Activated CD8-positive, alpha-beta T cell treated with anti-CD3 and anti-CD28 coated beads for 36 hours (primary cell): ENCODE measurements at regions of chr9 and their contacts with region 1.

Region 1: GRCh38 chr9:6764523-6764922 is 6.8 kb downstream of the KDM4C start:
- DNase-seq: no peak
- ATAC-seq: no peak
- H3K4me3 Mint-ChIP-seq: no peak overlapping the region
- H3K27ac Mint-ChIP-seq: peak overlapping the region; percentile 6
- H3K4me1 Mint-ChIP-seq: peaks cover 64% of the 10 kb centered on the region
- H3K27me3 Mint-ChIP-seq: no peaks in the 10 kb centered on the region
- CTCF ChIP-seq: no peak

Region 2: DNA sequence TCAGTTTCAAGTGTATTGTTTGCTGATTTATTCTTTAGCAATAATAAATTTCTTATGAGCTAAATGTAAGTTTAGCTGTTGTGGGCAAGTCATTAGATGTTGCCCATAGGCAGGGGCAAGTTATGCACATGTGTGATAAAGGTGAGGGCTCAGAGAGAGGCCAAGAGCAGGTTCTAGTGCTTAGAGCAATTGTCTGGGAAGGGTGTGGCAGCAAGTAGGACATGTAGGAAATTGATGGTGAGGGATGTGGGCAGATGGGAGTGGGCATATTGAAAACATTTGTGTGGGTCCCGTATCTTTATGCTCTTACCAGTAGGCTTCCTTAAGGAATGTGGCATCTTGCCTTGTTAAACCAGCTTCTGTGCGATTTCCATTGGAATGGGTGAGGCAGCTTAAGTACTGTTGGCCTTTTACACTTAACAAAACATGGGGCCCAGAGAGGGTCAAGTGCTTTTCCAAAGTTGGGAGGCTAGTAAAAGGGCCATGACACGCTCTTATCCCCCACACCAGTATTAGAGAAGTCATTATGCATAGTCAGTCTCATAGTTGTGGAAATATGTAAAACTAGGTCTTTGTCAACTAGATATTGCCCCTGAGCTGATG is 53.9 kb after region 1 on chr9:
- CTCF ChIA-PET with region 1: no interaction called
- POLR2A ChIA-PET with region 1: no interaction called
- intact Hi-C with region 1: no loop called
- DNase-seq: no peak
- ATAC-seq: no peak
- H3K4me3 Mint-ChIP-seq: no peak overlapping the region
- H3K27ac Mint-ChIP-seq: no peak overlapping the region
- H3K4me1 Mint-ChIP-seq: peaks cover 12% of the 10 kb centered on the region
- H3K27me3 Mint-ChIP-seq: no peaks in the 10 kb centered on the region
- CTCF ChIP-seq: no peak

Region 3: GRCh38 chr9:6873857-6874256 is 109.3 kb after region 1 on chr9:
- CTCF ChIA-PET with region 1: no interaction called
- POLR2A ChIA-PET with region 1: no interaction called
- intact Hi-C with region 1: loop called (anchors 10 kb)
- DNase-seq: peak; percentile 82
- ATAC-seq: peak; percentile 85
- H3K4me3 Mint-ChIP-seq: peak overlapping the region; percentile 24
- H3K27ac Mint-ChIP-seq: peak overlapping the region; percentile 62
- H3K4me1 Mint-ChIP-seq: peaks cover 63% of the 10 kb centered on the region
- H3K27me3 Mint-ChIP-seq: no peaks in the 10 kb centered on the region
- CTCF ChIP-seq: no peak